Transverse colon (tissue), 4 donors: ENCODE measurements at regions of chr3 and their contacts with region 1.

Region 1: GRCh38 chr3:194472290-194472920 is 14.4 kb downstream of the ATP13A3 start:
- DNase-seq: no peak
- H3K4me3 ChIP-seq: no peak overlapping the region
- H3K27ac ChIP-seq: no peak overlapping the region
- H3K4me1 ChIP-seq: peaks cover 0 to 23% (median 6%) of the 10 kb centered on the region in 4 donors
- H3K27me3 ChIP-seq: no peaks in the 10 kb centered on the region
- CTCF ChIP-seq: peak; percentile 93 to 97 (median 96)
- EP300 ChIP-seq: no peak
- POLR2A ChIP-seq: no peak

Region 2: GRCh38 chr3:194598771-194599557 is 126.6 kb after region 1 on chr3:
- in situ Hi-C with region 1: no loop called
- intact Hi-C with region 1: loop called (anchors 5 kb)
- DNase-seq: no peak
- H3K4me3 ChIP-seq: no peak overlapping the region
- H3K27ac ChIP-seq: no peak overlapping the region
- H3K4me1 ChIP-seq: peaks cover 0 to 5% (median 2%) of the 10 kb centered on the region in 4 donors
- H3K27me3 ChIP-seq: no peaks in the 10 kb centered on the region
- CTCF ChIP-seq: no peak
- EP300 ChIP-seq: no peak
- POLR2A ChIP-seq: no peak

Region 3: DNA sequence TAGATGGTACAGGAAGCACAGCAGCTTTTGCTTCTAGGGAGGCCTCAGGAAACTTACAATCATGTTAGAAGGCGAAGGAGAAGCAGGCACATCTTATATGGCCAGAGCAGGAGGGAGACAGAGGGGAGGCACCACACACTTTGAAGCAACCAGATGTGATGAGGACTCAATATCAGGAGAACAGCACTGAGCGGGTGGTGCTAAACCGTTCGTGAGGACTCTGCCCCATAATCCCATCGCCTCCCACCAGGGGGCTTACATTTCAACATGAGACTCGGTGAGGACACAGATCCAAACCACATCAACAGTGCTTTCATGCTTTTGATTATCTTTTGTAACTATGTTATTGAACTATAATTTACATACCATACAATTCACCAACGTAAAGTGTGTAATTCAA is 168.4 kb after region 1 on chr3:
- in situ Hi-C with region 1: no loop called
- intact Hi-C with region 1: no loop called
- DNase-seq: no peak
- H3K4me3 ChIP-seq: no peak overlapping the region
- H3K27ac ChIP-seq: no peak overlapping the region
- H3K4me1 ChIP-seq: no peaks in the 10 kb centered on the region
- H3K27me3 ChIP-seq: no peaks in the 10 kb centered on the region
- CTCF ChIP-seq: no peak
- EP300 ChIP-seq: no peak
- POLR2A ChIP-seq: no peak